ENCODE measurements at regions of chrX and their contacts with region 1.

Region 1: DNA sequence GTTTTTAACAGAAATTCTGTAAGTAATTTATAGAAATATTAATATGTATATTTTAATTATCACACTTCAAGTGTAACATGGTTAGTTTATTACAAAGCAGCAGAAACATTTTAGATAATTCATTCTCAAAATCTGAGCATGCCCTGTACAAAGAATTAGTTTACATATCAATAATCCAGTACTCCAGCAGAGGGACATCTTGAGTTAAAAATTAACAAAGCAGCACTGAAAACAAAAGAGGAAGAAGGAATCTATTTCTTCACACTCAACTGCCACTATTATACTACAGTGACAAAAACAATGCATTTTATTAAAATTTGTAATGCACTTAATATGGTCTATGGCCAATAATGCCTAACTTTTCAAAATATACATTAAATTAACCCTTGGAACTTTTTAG is 179.1 kb upstream of the KLHL4 start:
- DNase-seq: no peak

Region 2: GRCh38 chrX:87664381-87664780 is 325.9 kb after region 1 on chrX:
- intact Hi-C with region 1: loop called (anchors 5 to 10 kb)
- DNase-seq: no peak